GM18951 (cell line): ENCODE measurements at regions of chr12 and their contacts with region 1.

Region 1: GRCh38 chr12:67943226-67943892 is 45.9 kb upstream of the IFNG-AS1 start:
- POLR2A ChIP-seq: no peak

Region 2: DNA sequence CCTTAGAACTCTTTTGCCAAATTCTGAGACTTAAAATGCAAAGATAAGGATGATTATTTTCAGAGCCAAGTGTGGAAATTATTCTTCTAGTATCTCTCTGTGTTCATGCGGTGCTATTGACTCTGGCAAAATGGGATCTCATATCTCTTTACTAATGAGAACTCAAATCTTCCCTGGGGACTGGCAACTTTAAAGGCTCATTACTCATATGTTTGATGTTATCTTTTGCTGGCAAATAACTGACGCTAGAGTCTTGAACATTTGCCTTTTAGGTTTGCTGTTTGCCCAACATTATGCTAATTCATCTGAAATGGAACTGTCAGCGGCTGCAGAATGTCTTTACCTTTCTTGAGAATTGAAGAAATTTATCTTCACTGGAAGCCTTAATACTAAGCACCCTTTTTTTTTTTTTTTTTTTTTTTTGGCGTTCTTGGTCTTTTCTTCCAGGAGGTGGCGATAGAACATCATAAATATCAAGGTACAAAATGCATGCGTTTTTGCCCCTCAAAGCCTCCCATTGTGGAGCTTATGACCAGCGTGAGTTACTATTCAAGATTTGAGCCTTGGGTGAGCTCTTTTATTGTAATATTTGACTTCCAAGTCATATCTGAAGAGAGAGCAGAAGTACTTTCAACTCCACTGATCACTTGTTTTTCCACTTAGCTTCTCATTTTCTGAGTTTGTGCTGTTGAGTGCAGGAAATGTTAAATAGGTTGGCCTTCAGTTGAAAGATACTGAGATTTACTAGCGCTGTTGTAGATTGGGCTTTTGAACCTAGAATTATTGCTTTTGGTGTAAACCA is 587.6 kb before region 1 on chr12:
- in situ Hi-C with region 1: loop called (anchors 10 kb)
- POLR2A ChIP-seq: no peak